ENCODE measurements at regions of chr1 and their contacts with region 1.

Region 1: GRCh38 chr1:189429610-189430009 is 1048.1 kb downstream of the BRINP3 start:
- DNase-seq: peak; percentile 37
- H3K4me3 ChIP-seq: no peak overlapping the region
- H3K27ac ChIP-seq: no peak overlapping the region
- H3K4me1 ChIP-seq: no peaks in the 10 kb centered on the region
- H3K27me3 ChIP-seq: no peaks in the 10 kb centered on the region
- CTCF ChIP-seq: peak; percentile 77 to 82

Region 2: DNA sequence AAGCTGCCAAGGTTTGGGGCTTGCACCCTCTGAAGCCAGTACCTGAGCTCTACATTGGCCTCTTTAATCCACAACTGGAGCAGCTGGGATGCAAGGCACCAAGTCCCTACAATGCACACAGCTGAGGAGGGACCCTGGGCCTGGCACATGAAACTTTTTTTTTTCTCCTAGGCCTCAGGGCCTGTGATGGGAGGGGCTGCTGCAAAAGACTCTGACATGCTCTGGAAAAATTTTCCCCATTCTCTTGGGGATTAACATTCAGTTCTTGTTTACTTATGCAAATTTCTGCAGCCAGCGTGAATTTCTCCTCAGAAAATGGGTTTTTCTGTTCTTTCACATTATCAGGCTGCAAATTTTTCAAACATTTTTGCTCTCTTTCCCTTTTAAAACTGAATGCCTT is 24.2 kb before region 1 on chr1:
- CTCF ChIA-PET with region 1: no interaction called
- dilution Hi-C with region 1: no loop called
- in situ Hi-C with region 1: no loop called
- intact Hi-C with region 1: no loop called
- DNase-seq: no peak
- H3K4me3 ChIP-seq: no peak overlapping the region
- H3K27ac ChIP-seq: no peak overlapping the region
- H3K4me1 ChIP-seq: no peaks in the 10 kb centered on the region
- H3K27me3 ChIP-seq: no peaks in the 10 kb centered on the region
- CTCF ChIP-seq: no peak

Region 3: GRCh38 chr1:189463166-189463565 is 33.6 kb after region 1 on chr1:
- CTCF ChIA-PET with region 1: no interaction called
- dilution Hi-C with region 1: no loop called
- in situ Hi-C with region 1: no loop called
- intact Hi-C with region 1: no loop called
- DNase-seq: no peak
- H3K4me3 ChIP-seq: no peak overlapping the region
- H3K27ac ChIP-seq: no peak overlapping the region
- H3K4me1 ChIP-seq: no peaks in the 10 kb centered on the region
- H3K27me3 ChIP-seq: peaks cover 4% of the 10 kb centered on the region
- CTCF ChIP-seq: no peak

Region 4: DNA sequence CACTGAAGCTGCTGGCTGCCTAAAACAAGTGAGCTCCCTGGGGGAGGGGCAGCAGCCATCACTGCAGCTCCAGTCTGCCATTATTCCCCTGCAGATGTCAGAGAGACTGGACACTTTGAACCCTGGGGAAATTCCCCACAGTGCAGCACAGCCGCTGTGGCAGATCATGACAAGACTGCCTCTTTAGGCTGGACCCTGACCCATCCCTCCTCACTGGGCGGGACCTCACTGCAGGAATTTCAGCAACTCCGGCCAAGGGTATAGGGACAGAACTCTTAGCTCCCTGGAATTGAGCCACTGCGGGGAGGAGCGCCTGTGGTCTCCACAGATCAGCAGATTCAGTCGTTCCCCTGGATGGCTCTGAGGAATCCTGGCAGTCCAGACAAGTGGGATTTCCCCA is 83.5 kb after region 1 on chr1:
- CTCF ChIA-PET with region 1: no interaction called
- dilution Hi-C with region 1: no loop called
- in situ Hi-C with region 1: no loop called
- intact Hi-C with region 1: no loop called
- DNase-seq: no peak
- H3K4me3 ChIP-seq: no peak overlapping the region
- H3K27ac ChIP-seq: no peak overlapping the region
- H3K4me1 ChIP-seq: no peaks in the 10 kb centered on the region
- H3K27me3 ChIP-seq: peaks cover 4% of the 10 kb centered on the region
- CTCF ChIP-seq: no peak

Region 5: GRCh38 chr1:189673218-189673617 is 243.6 kb after region 1 on chr1:
- CTCF ChIA-PET with region 1: no interaction called
- dilution Hi-C with region 1: no loop called
- in situ Hi-C with region 1: no loop called
- intact Hi-C with region 1: loop called (anchors 1 kb)
- DNase-seq: no peak
- H3K4me3 ChIP-seq: no peak overlapping the region
- H3K27ac ChIP-seq: no peak overlapping the region
- H3K4me1 ChIP-seq: no peaks in the 10 kb centered on the region
- H3K27me3 ChIP-seq: no peaks in the 10 kb centered on the region
- CTCF ChIP-seq: no peak

Region 6: DNA sequence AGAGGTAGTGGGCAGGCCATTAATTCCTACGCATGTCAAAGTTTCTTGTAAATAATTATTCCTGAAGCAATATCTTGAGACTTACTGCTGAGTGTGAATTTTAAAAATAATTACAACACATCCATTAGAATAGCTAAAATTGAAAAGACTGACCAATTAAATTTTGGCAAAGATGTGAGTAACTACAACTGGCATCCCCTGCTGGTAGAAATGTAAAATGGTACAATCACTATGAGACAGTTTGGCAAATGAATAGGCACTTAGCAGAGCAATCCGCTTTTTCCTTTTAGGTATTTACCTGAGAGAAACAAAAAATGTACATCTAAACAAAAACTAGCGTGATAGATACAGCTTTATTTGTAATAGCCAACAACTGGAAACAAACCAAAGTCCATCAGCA is 249.2 kb after region 1 on chr1:
- CTCF ChIA-PET with region 1: no interaction called
- dilution Hi-C with region 1: no loop called
- in situ Hi-C with region 1: no loop called
- intact Hi-C with region 1: loop called (anchors 1 kb)
- DNase-seq: no peak
- H3K4me3 ChIP-seq: no peak overlapping the region
- H3K27ac ChIP-seq: no peak overlapping the region
- H3K4me1 ChIP-seq: no peaks in the 10 kb centered on the region
- H3K27me3 ChIP-seq: peaks cover 3% of the 10 kb centered on the region
- CTCF ChIP-seq: peak; percentile 75 to 77

Region 7: DNA sequence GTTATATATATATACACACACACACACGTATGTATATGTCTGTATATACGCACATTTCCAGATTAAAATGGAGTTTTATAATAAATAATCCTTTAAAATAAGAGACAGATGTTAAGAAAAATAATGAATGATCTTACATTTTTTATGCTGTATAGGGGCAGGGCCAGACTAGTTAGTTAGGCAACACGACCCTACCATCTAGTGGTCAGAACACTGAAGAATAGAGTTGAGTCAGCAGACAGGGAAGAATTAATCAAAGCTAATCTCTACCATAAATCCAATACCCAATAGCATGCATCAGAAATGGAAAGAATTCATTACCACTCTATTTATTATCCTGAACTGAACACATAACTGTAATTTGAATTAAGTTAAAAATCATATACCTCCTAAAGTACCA is 891.3 kb after region 1 on chr1:
- CTCF ChIA-PET with region 1: no interaction called
- dilution Hi-C with region 1: no loop called
- in situ Hi-C with region 1: no loop called
- intact Hi-C with region 1: loop called (anchors 2 kb)
- DNase-seq: peak; percentile 3
- H3K4me3 ChIP-seq: no peak overlapping the region
- H3K27ac ChIP-seq: no peak overlapping the region
- H3K4me1 ChIP-seq: no peaks in the 10 kb centered on the region
- H3K27me3 ChIP-seq: no peaks in the 10 kb centered on the region
- CTCF ChIP-seq: peak; percentile 8 to 39

Region 8: GRCh38 chr1:190373705-190374336 is 944.2 kb after region 1 on chr1:
- CTCF ChIA-PET with region 1: no interaction called
- dilution Hi-C with region 1: no loop called
- in situ Hi-C with region 1: no loop called
- intact Hi-C with region 1: loop called (anchors 10 kb)
- DNase-seq: peak; percentile 9
- H3K4me3 ChIP-seq: no peak overlapping the region
- H3K27ac ChIP-seq: no peak overlapping the region
- H3K4me1 ChIP-seq: no peaks in the 10 kb centered on the region
- H3K27me3 ChIP-seq: peaks cover 2% of the 10 kb centered on the region
- CTCF ChIP-seq: peak; percentile 49 to 74

Measured in mammary epithelial cell (primary cell).